B cell (primary cell): ENCODE measurements at regions of chr1 and their contacts with region 1.

Region 1: GRCh38 chr1:151156515-151156819 is at the start of gene TNFAIP8L2:
- DNase-seq: peak; percentile 77
- ATAC-seq: peak; percentile 85
- H3K4me3 ChIP-seq: peak within 1 kb of the TSS; percentile 72 to 98 (median 72)
- H3K4me3 Mint-ChIP-seq: peak within 1 kb of the TSS; percentile 99
- H3K27ac ChIP-seq: peak within 1 kb of the TSS; percentile 29 to 79
- H3K27ac Mint-ChIP-seq: peak within 1 kb of the TSS; percentile 97
- H3K4me1 ChIP-seq: peaks cover 30 to 37% of the 10 kb centered on the region in 2 donors
- H3K4me1 Mint-ChIP-seq: peaks cover 41% of the 10 kb centered on the region
- H3K27me3 ChIP-seq: no peaks in the 10 kb centered on the region
- H3K27me3 Mint-ChIP-seq: no peaks in the 10 kb centered on the region
- CTCF ChIP-seq: no peak
- total RNA-seq, gene TNFAIP8L2: 14.9 and 17.6 TPM in 2 replicates

Region 2: DNA sequence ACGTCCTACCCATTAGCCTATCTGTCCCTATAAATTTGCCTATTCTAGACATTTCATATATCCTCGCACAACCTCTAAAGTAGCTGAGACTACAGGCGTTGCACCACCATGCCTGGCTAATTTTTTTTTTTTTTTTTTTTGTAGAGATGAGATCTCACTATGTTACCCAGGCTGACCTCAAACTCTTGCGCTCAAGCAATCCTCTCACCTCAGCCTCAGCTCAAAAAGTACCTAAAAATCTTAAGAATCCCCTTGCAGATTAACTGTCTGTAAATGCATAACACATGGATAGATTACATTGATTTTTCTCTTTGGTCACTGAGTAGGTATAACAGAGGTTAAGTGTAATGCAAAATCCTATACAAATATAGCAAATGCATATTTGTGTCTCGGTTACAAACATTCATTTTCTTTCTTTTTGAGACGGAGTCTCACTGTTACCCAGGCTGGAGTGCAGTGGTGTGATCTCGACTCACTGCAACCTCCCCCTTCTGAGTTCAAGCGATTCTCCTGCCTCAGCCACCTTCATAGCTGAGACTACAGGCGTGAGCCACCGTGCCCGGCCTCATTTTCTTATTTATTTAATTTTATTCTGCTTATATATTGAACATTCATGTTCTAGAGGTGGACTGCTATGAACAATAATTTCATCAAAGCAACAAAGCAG is 438.1 kb before region 1 on chr1:
- CTCF ChIA-PET with region 1: no interaction called
- POLR2A ChIA-PET with region 1: no interaction called
- intact Hi-C with region 1: no loop called
- DNase-seq: no peak
- ATAC-seq: no peak
- H3K4me3 ChIP-seq: no peak overlapping the region
- H3K4me3 Mint-ChIP-seq: no peak overlapping the region
- H3K27ac ChIP-seq: no peak overlapping the region
- H3K27ac Mint-ChIP-seq: no peak overlapping the region
- H3K4me1 ChIP-seq: no peaks in the 10 kb centered on the region
- H3K4me1 Mint-ChIP-seq: no peaks in the 10 kb centered on the region
- H3K27me3 ChIP-seq: no peaks in the 10 kb centered on the region
- H3K27me3 Mint-ChIP-seq: no peaks in the 10 kb centered on the region
- CTCF ChIP-seq: no peak

Region 3: DNA sequence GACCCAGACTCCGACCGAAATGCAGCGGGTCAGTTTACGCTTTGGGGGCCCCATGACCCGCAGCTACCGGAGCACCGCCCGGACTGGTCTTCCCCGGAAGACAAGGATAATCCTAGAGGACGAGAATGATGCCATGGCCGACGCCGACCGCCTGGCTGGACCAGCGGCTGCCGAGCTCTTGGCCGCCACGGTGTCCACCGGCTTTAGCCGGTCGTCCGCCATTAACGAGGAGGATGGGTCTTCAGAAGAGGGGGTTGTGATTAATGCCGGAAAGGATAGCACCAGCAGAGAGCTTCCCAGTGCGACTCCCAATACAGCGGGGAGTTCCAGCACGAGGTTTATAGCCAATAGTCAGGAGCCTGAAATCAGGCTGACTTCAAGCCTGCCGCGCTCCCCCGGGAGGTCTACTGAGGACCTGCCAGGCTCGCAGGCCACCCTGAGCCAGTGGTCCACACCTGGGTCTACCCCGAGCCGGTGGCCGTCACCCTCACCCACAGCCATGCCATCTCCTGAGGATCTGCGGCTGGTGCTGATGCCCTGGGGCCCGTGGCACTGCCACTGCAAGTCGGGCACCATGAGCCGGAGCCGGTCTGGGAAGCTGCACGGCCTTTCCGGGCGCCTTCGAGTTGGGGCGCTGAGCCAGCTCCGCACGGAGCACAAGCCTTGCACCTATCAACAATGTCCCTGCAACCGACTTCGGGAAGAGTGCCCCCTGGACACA is 108.4 kb before region 1 on chr1:
- CTCF ChIA-PET with region 1: interaction called, 3 read pairs
- POLR2A ChIA-PET with region 1: interaction called, 5 read pairs
- intact Hi-C with region 1: loop called (anchors 2 kb)
- DNase-seq: peak; percentile 79
- ATAC-seq: peak; percentile 69
- H3K4me3 ChIP-seq: peak overlapping the region; percentile 70 to 97 (median 93)
- H3K4me3 Mint-ChIP-seq: peak overlapping the region; percentile 96
- H3K27ac ChIP-seq: peak overlapping the region; percentile 71 to 75
- H3K27ac Mint-ChIP-seq: peak overlapping the region; percentile 94
- H3K4me1 ChIP-seq: peaks cover 20 to 30% of the 10 kb centered on the region in 2 donors
- H3K4me1 Mint-ChIP-seq: peaks cover 42% of the 10 kb centered on the region
- H3K27me3 ChIP-seq: no peaks in the 10 kb centered on the region
- H3K27me3 Mint-ChIP-seq: no peaks in the 10 kb centered on the region
- CTCF ChIP-seq: peak; percentile 70

Region 4: GRCh38 chr1:151130987-151131586 is 25.4 kb before region 1 on chr1:
- CTCF ChIA-PET with region 1: interaction called, 12 read pairs
- POLR2A ChIA-PET with region 1: interaction called, 3 read pairs
- intact Hi-C with region 1: loop called (anchors 2 kb)
- DNase-seq: peak; percentile 89
- ATAC-seq: peak; percentile 100
- H3K4me3 ChIP-seq: peak overlapping the region in 4 of 5 experiments; percentile 42 to 58 (median 51)
- H3K4me3 Mint-ChIP-seq: peak overlapping the region; percentile 89
- H3K27ac ChIP-seq: peak overlapping the region; percentile 46 to 53
- H3K27ac Mint-ChIP-seq: peak overlapping the region; percentile 92
- H3K4me1 ChIP-seq: peaks cover 6 to 15% of the 10 kb centered on the region in 2 donors
- H3K4me1 Mint-ChIP-seq: peaks cover 14% of the 10 kb centered on the region
- H3K27me3 ChIP-seq: peaks cover 0 to 4% (median 0%) of the 10 kb centered on the region in 4 experiments
- H3K27me3 Mint-ChIP-seq: no peaks in the 10 kb centered on the region
- CTCF ChIP-seq: no peak